ENCODE measurements at regions of chr3 and their contacts with region 1.

Region 1: GRCh38 chr3:13012228-13012691 is 61.0 kb downstream of the IQSEC1 start:
- DNase-seq: peak; percentile 73 to 80
- ATAC-seq: peak; percentile 39 to 60 (median 40)
- H3K4me3 ChIP-seq: no peak overlapping the region
- H3K4me3 Mint-ChIP-seq: peak overlapping the region; percentile 90
- H3K27ac ChIP-seq: peak overlapping the region; percentile 100
- H3K27ac Mint-ChIP-seq: peak overlapping the region; percentile 98 to 99
- H3K4me1 ChIP-seq: peaks cover 100% of the 10 kb centered on the region
- H3K4me1 Mint-ChIP-seq: peaks cover 86 to 98% of the 10 kb centered on the region in 2 donors
- H3K27me3 ChIP-seq: no peaks in the 10 kb centered on the region
- H3K27me3 Mint-ChIP-seq: no peaks in the 10 kb centered on the region
- CTCF ChIP-seq: no peak

Region 2: DNA sequence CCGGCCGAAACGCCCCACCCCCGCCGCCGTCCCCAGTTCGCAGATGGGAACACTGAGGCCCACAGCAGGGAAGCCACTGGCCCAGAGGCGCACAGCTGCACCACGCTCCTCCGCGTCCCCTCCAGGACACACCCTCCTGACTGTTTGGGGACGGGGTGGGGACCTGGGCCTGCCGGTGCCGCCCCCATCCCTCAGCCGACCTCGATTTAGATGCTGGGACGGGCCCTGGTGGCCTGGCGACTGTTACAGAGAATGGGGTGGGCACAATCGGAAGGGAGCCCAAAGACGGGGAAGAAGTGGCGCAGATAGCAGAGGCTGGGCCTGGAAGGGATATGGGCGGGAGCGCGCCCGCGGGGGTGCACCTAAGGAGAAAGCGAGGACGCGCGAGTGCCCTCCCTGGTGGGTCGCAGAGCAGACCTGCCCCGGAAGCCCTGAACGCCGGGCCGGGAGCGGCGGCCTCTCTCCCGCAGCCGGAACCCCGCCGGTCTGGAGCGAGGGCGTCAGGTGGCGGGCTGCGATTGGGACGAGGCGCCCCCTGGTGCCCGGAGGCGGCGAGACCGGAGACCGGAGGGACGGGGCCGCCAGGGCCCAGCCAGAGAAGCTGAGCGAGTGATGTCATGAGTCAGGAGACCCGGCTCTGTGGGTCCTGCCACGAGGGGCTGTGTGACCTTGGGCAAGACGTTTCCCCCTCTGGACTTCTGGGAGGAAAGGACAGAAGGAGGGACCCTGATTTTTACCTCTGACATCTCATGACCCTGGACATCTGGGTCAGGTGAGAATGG is 17.5 kb before region 1 on chr3:
- intact Hi-C with region 1: loop called (anchors 2 kb)
- DNase-seq: peak; percentile 88 to 91
- ATAC-seq: peak; percentile 82 to 87 (median 85)
- H3K4me3 ChIP-seq: peak overlapping the region; percentile 82
- H3K4me3 Mint-ChIP-seq: peak overlapping the region; percentile 98
- H3K27ac ChIP-seq: peak overlapping the region; percentile 93
- H3K27ac Mint-ChIP-seq: peak overlapping the region; percentile 90 to 96
- H3K4me1 ChIP-seq: peaks cover 70% of the 10 kb centered on the region
- H3K4me1 Mint-ChIP-seq: peaks cover 55 to 70% of the 10 kb centered on the region in 2 donors
- H3K27me3 ChIP-seq: no peaks in the 10 kb centered on the region
- H3K27me3 Mint-ChIP-seq: no peaks in the 10 kb centered on the region
- CTCF ChIP-seq: peak; percentile 93

Region 3: GRCh38 chr3:13040361-13041074 is 28.3 kb after region 1 on chr3:
- intact Hi-C with region 1: loop called (anchors 1 kb)
- DNase-seq: peak; percentile 74 to 77
- ATAC-seq: peak; percentile 97 to 98 (median 98)
- H3K4me3 ChIP-seq: no peak overlapping the region
- H3K4me3 Mint-ChIP-seq: peak overlapping the region; percentile 82
- H3K27ac ChIP-seq: peak overlapping the region; percentile 58
- H3K27ac Mint-ChIP-seq: peak overlapping the region; percentile 89 to 94
- H3K4me1 ChIP-seq: peaks cover 42% of the 10 kb centered on the region
- H3K4me1 Mint-ChIP-seq: peaks cover 24 to 45% of the 10 kb centered on the region in 2 donors
- H3K27me3 ChIP-seq: no peaks in the 10 kb centered on the region
- H3K27me3 Mint-ChIP-seq: no peaks in the 10 kb centered on the region
- CTCF ChIP-seq: no peak

Region 4: DNA sequence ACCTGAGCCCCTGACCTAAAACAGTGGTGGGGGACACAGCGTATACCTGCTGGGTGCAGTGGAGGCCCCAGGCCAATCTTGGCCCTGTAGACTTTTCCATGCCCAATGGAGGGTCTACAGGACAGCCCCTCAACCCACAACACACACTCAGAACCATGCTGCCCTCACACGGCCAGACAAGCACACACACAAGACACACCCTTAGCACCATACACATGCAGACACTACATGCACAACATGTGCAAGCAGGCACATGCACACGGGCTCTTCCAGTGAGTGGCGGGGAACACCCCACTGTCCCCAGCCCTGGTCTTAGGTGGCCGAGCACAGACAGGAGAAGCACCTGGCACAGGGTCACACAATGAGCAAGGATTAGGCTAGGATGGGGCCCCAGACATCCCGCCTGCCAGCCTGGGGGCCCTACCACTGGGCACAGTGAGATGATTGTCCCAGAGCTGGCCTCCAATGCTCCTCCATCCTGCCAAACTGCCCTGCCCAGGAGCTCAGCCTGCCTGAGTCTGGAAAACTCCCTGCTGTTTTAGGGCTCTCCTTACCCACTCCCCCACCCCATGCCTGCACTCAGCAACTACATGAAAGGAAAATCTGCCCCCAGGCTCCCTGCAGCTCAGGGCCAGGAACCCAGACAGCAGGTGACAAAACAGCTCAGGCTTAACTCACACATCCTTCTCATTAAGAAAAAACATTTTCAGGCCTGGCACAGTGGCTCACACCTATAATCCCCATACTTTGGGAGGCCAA is 45.2 kb after region 1 on chr3:
- intact Hi-C with region 1: no loop called
- DNase-seq: no peak
- ATAC-seq: no peak
- H3K4me3 ChIP-seq: no peak overlapping the region
- H3K4me3 Mint-ChIP-seq: no peak overlapping the region
- H3K27ac ChIP-seq: no peak overlapping the region
- H3K27ac Mint-ChIP-seq: peak overlapping the region in 1 of 2 donors; percentile 68
- H3K4me1 ChIP-seq: no peaks in the 10 kb centered on the region
- H3K4me1 Mint-ChIP-seq: peaks cover 23 to 37% of the 10 kb centered on the region in 2 donors
- H3K27me3 ChIP-seq: no peaks in the 10 kb centered on the region
- H3K27me3 Mint-ChIP-seq: no peaks in the 10 kb centered on the region
- CTCF ChIP-seq: no peak

Region 5: GRCh38 chr3:13069495-13069894 is 57.2 kb after region 1 on chr3:
- intact Hi-C with region 1: loop called (anchors 1 kb)
- DNase-seq: peak; percentile 62 to 75
- ATAC-seq: peak; percentile 71 to 86 (median 79)
- H3K4me3 ChIP-seq: no peak overlapping the region
- H3K4me3 Mint-ChIP-seq: peak overlapping the region; percentile 69
- H3K27ac ChIP-seq: peak overlapping the region; percentile 80
- H3K27ac Mint-ChIP-seq: peak overlapping the region; percentile 93 to 94
- H3K4me1 ChIP-seq: peaks cover 75% of the 10 kb centered on the region
- H3K4me1 Mint-ChIP-seq: peaks cover 55 to 70% of the 10 kb centered on the region in 2 donors
- H3K27me3 ChIP-seq: no peaks in the 10 kb centered on the region
- H3K27me3 Mint-ChIP-seq: peaks cover 0 to 5% of the 10 kb centered on the region in 2 donors
- CTCF ChIP-seq: no peak

Region 6: GRCh38 chr3:13419505-13420044 is 407.3 kb after region 1 on chr3:
- intact Hi-C with region 1: loop called (anchors 5 kb)
- DNase-seq: peak in 1 of 2 donors; percentile 83
- ATAC-seq: peak; percentile 46 to 72 (median 64)
- H3K4me3 ChIP-seq: peak overlapping the region; percentile 68
- H3K4me3 Mint-ChIP-seq: peak overlapping the region; percentile 89
- H3K27ac ChIP-seq: peak overlapping the region; percentile 85
- H3K27ac Mint-ChIP-seq: peak overlapping the region; percentile 94 to 95
- H3K4me1 ChIP-seq: peaks cover 56% of the 10 kb centered on the region
- H3K4me1 Mint-ChIP-seq: peaks cover 47 to 51% of the 10 kb centered on the region in 2 donors
- H3K27me3 ChIP-seq: no peaks in the 10 kb centered on the region
- H3K27me3 Mint-ChIP-seq: no peaks in the 10 kb centered on the region
- CTCF ChIP-seq: peak; percentile 11

Measured in natural killer cell (primary cell).